Endothelial cell of umbilical vein (primary cell): ENCODE measurements at regions of chr18 and their contacts with region 1.

Region 1: GRCh38 chr18:61322265-61322873 is 10.9 kb upstream of the CDH20 start:
- DNase-seq: peak; percentile 53
- H3K4me3 ChIP-seq: no peak overlapping the region
- H3K27ac ChIP-seq: no peak overlapping the region
- H3K4me1 ChIP-seq: no peaks in the 10 kb centered on the region
- H3K27me3 ChIP-seq: no peaks in the 10 kb centered on the region
- CTCF ChIP-seq: peak; percentile 82 to 89
- POLR2A ChIP-seq: no peak

Region 2: DNA sequence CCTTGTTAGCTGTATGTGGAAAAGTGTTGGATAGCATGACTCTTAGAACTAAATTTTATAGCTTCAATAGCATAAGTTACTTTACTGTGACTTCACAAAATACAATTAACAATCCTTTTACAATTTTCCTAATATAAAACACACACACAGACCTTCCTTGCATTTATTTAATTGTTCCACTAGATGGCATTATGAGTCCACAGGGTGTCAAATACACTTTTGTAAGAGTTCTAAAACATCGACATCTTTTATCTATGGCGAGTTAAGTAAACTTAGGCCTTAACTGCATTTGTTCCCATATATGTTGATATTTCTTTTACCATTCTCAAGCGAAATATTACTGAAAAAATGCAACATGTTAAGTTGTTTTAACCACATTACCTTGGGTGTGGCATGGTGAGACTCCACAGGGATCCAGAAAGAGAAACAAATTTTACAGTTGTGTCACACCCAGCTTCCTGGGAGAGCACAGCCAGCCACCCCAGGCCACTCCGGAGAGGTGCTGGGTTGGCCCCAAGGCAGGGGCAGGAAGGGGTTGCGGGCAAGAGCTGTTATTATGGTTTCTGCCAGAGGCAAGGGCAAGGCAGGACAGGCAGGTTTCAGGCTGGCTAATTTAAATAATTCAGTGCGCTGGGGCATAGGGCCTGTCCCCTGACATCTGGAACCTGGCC is 637.4 kb before region 1 on chr18:
- CTCF ChIA-PET with region 1: interaction called, 13 read pairs
- POLR2A ChIA-PET with region 1: no interaction called
- dilution Hi-C with region 1: no loop called
- intact Hi-C with region 1: loop called (anchors 2 kb)
- DNase-seq: peak; percentile 57
- H3K4me3 ChIP-seq: no peak overlapping the region
- H3K27ac ChIP-seq: no peak overlapping the region
- H3K4me1 ChIP-seq: no peaks in the 10 kb centered on the region
- H3K27me3 ChIP-seq: peaks cover 0 to 1% of the 10 kb centered on the region in 2 experiments
- CTCF ChIP-seq: peak; percentile 35 to 37
- POLR2A ChIP-seq: no peak

Region 3: DNA sequence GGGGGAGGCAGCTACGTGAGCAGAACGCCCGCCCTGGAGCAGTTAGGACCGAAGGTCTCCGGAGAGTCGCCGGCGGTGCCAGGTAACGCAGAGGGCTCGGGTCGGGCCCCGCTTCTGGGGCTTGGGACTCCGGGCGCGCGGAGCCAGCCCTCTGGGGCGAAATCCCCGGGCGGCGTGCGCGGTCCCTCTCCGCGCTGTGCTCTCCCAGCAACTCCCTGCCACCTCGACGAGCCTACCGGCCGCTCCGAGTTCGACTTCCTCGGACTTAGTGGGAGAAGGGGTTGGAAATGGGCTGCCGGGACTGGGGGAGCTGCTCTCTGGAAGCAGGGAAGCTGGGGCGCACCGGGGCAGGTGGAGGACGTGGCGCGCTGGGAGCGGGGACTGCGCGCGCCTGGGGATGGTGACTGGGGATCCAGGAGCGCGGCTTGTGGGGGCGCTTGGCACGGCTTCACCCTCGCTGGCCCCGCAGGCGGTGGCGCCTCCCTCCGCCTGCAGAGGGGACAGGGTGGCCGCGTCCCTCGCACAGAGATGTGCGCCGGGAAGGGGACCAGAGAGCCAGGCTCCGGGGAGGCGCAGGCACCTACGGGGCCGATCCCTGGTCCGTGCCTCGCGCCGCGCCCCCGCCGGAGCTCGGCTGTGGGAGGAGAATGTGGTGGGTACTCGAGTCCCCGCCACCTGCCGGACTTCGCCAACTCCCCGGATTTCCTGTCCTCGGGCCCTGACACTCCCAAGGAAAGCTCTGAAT is 11.5 kb after region 1 on chr18:
- CTCF ChIA-PET with region 1: interaction called, 19 read pairs
- POLR2A ChIA-PET with region 1: no interaction called
- dilution Hi-C with region 1: no loop called
- intact Hi-C with region 1: no loop called
- DNase-seq: no peak
- H3K4me3 ChIP-seq: peak overlapping the region; percentile 23 to 62 (median 50)
- H3K27ac ChIP-seq: no peak overlapping the region
- H3K4me1 ChIP-seq: peaks cover 11% of the 10 kb centered on the region
- H3K27me3 ChIP-seq: peaks cover 14 to 16% of the 10 kb centered on the region in 2 experiments
- CTCF ChIP-seq: no peak
- POLR2A ChIP-seq: no peak

Region 4: GRCh38 chr18:61435064-61435652 is 112.8 kb after region 1 on chr18:
- CTCF ChIA-PET with region 1: no interaction called
- POLR2A ChIA-PET with region 1: no interaction called
- dilution Hi-C with region 1: no loop called
- intact Hi-C with region 1: loop called (anchors 1 kb)
- DNase-seq: peak; percentile 36
- H3K4me3 ChIP-seq: no peak overlapping the region
- H3K27ac ChIP-seq: no peak overlapping the region
- H3K4me1 ChIP-seq: no peaks in the 10 kb centered on the region
- H3K27me3 ChIP-seq: no peaks in the 10 kb centered on the region
- CTCF ChIP-seq: peak; percentile 59
- POLR2A ChIP-seq: no peak

Region 5: DNA sequence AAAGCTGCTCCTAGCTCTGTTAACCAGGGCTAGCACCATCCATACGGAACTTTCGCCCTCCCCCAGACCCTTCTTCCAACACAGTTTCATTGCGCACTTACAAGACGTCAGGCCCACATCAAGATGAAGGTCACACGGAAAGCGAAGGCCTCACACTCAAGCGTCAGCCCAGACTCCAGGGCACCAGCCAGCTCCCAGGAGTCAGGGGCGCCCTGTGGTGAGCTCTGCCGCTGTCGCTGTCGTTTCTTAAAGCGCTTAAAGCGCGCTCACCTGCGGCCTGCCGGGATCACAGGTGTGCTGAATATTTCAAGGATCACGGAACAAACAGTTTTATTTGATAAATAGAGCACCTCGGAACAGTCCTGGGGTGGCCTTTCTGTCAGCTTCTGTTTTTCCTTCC is 174.0 kb after region 1 on chr18:
- CTCF ChIA-PET with region 1: interaction called, 354 read pairs
- POLR2A ChIA-PET with region 1: no interaction called
- dilution Hi-C with region 1: no loop called
- intact Hi-C with region 1: no loop called
- DNase-seq: no peak
- H3K4me3 ChIP-seq: no peak overlapping the region
- H3K27ac ChIP-seq: no peak overlapping the region
- H3K4me1 ChIP-seq: no peaks in the 10 kb centered on the region
- H3K27me3 ChIP-seq: peaks cover 0 to 8% of the 10 kb centered on the region in 2 experiments
- CTCF ChIP-seq: no peak
- POLR2A ChIP-seq: no peak

Region 6: DNA sequence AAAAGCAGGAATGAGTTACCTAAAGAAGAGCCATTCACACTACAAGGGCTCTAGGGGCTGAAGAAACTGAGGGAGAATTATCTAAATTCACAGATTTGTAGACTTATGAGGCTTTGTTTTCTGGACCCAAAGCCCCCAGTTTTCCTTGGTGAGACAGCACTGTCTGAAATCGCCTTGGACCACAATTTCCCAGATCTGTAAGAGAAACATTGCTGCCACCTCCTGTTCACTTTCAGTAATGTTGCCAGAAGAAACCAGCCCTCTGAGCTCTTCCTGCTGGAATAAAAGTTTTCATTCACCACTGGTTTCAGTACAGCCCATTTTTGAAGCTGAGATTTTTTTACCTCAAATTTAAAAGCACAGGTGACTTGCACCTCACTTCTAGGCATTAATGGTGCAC is 180.1 kb after region 1 on chr18:
- CTCF ChIA-PET with region 1: interaction called, 354 read pairs
- POLR2A ChIA-PET with region 1: no interaction called
- dilution Hi-C with region 1: no loop called
- intact Hi-C with region 1: loop called (anchors 1 kb)
- DNase-seq: peak; percentile 65
- H3K4me3 ChIP-seq: no peak overlapping the region
- H3K27ac ChIP-seq: no peak overlapping the region
- H3K4me1 ChIP-seq: no peaks in the 10 kb centered on the region
- H3K27me3 ChIP-seq: peaks cover 0 to 2% of the 10 kb centered on the region in 2 experiments
- CTCF ChIP-seq: peak; percentile 58 to 64
- POLR2A ChIP-seq: no peak

Region 7: GRCh38 chr18:61901323-61901986 is 579.1 kb after region 1 on chr18:
- CTCF ChIA-PET with region 1: no interaction called
- POLR2A ChIA-PET with region 1: interaction called, 10 read pairs
- dilution Hi-C with region 1: no loop called
- intact Hi-C with region 1: no loop called
- DNase-seq: peak; percentile 74
- H3K4me3 ChIP-seq: no peak overlapping the region
- H3K27ac ChIP-seq: no peak overlapping the region
- H3K4me1 ChIP-seq: peaks cover 4% of the 10 kb centered on the region
- H3K27me3 ChIP-seq: no peaks in the 10 kb centered on the region
- CTCF ChIP-seq: peak; percentile 91 to 95
- POLR2A ChIP-seq: no peak